Activated naive CD8-positive, alpha-beta T cell treated with anti-CD3 and anti-CD28 coated beads, Interleukin-2, amount 10 ng/mL, durations not matched to agents 7 days and 5 days (primary cell): ENCODE measurements at regions of chr1 and their contacts with region 1.

Region 1: GRCh38 chr1:150578965-150579798 is at the start of gene MCL1:
- DNase-seq: peak; percentile 88
- ATAC-seq: peak; percentile 69
- H3K4me3 Mint-ChIP-seq: peak within 1 kb of the TSS; percentile 92
- H3K27ac Mint-ChIP-seq: peak within 1 kb of the TSS; percentile 91
- H3K4me1 Mint-ChIP-seq: peaks cover 26% of the 10 kb centered on the region
- H3K27me3 Mint-ChIP-seq: no peaks in the 10 kb centered on the region
- total RNA-seq, gene MCL1: 302 to 303 TPM

Region 2: DNA sequence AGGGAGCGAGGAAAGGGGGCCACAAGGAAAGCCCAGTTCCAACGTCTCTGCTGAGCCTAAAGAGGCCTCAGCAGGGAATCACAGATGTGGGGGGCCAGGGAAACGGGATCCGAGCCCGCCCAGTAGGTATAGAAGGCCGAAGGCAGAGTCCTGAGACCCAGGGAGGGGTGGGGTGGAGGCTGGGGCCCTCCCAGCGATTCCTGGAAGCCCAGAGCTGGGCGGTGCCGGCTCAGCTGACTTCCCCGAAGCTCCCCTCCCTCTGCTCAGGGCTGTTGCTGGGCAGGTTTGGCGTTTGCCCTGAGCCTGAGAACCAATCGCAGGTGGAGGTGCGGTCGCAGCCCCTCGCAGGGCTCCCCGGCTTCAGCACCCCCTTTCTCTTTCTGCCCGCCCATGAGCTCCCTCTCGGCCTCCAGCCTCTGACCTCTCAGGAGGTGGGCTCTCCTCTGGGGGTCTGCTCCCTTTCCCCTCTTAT is 17.2 kb before region 1 on chr1:
- POLR2A ChIA-PET with region 1: interaction called, 1,003 read pairs
- DNase-seq: peak; percentile 87
- ATAC-seq: peak; percentile 61
- H3K4me3 Mint-ChIP-seq: peak overlapping the region; percentile 97
- H3K27ac Mint-ChIP-seq: peak overlapping the region; percentile 100
- H3K4me1 Mint-ChIP-seq: peaks cover 43% of the 10 kb centered on the region
- H3K27me3 Mint-ChIP-seq: no peaks in the 10 kb centered on the region

Region 3: GRCh38 chr1:150606463-150607148 is 27.4 kb after region 1 on chr1:
- POLR2A ChIA-PET with region 1: interaction called, 98 read pairs
- DNase-seq: no peak
- ATAC-seq: no peak
- H3K4me3 Mint-ChIP-seq: no peak overlapping the region
- H3K27ac Mint-ChIP-seq: peak overlapping the region; percentile 15
- H3K4me1 Mint-ChIP-seq: peaks cover 12% of the 10 kb centered on the region
- H3K27me3 Mint-ChIP-seq: no peaks in the 10 kb centered on the region

Region 4: GRCh38 chr1:150613061-150613920 is 34.1 kb after region 1 on chr1:
- POLR2A ChIA-PET with region 1: interaction called, 98 read pairs
- DNase-seq: no peak
- ATAC-seq: peak; percentile 48
- H3K4me3 Mint-ChIP-seq: peak overlapping the region; percentile 55
- H3K27ac Mint-ChIP-seq: peak overlapping the region; percentile 83
- H3K4me1 Mint-ChIP-seq: peaks cover 49% of the 10 kb centered on the region
- H3K27me3 Mint-ChIP-seq: no peaks in the 10 kb centered on the region

Region 5: GRCh38 chr1:150621497-150622302 is 42.5 kb after region 1 on chr1:
- POLR2A ChIA-PET with region 1: interaction called, 98 read pairs
- DNase-seq: peak; percentile 52
- ATAC-seq: peak; percentile 45
- H3K4me3 Mint-ChIP-seq: no peak overlapping the region
- H3K27ac Mint-ChIP-seq: peak overlapping the region; percentile 81
- H3K4me1 Mint-ChIP-seq: peaks cover 34% of the 10 kb centered on the region
- H3K27me3 Mint-ChIP-seq: no peaks in the 10 kb centered on the region

Region 6: DNA sequence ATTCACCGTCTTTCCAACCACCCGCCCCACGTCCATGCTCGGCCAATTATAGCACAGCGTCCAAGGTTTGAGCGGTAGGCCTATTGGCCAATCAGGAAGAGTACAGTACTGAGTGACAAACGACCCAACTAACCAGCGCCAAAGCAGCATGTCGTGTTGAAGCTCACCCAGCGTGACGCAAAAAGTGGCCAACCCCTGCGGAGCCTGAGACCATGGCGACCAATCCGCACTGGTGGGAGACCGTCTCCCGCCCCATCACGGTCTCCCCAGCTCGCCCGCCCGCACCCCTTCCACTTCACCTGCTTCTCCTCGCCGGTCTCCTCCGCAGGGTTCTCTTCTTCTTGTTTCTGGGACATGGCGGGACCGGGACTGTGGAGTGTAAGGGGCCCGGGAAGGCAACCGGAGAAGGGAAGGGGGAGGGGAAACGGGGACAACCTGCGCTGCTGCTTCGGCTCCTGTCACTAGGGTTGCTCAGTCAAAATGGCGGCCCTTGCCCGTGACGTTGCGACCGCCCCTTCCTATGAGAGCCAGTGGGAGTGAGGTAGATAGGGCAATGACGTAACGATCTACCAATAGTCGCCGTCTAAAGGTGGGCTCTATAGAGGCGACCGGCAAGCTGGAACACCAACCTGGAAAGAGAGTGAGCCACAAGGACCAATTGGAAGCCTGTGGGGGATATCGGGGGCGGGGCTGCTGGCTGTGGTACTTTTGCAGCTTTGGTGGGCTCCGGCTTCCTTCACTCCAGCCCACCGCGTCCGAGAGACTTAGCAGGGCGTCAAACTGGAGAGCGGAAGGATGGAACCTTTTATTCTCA is 50.1 kb after region 1 on chr1 and contains the start of gene ENSA:
- POLR2A ChIA-PET with region 1: interaction called, 76 read pairs
- DNase-seq: peak; percentile 91
- ATAC-seq: peak; percentile 91
- H3K4me3 Mint-ChIP-seq: no peak within 1 kb of the TSS
- H3K27ac Mint-ChIP-seq: no peak within 1 kb of the TSS
- H3K4me1 Mint-ChIP-seq: peaks cover 31% of the 10 kb centered on the region
- H3K27me3 Mint-ChIP-seq: no peaks in the 10 kb centered on the region
- total RNA-seq, gene ENSA: 161 to 172 TPM

Region 7: DNA sequence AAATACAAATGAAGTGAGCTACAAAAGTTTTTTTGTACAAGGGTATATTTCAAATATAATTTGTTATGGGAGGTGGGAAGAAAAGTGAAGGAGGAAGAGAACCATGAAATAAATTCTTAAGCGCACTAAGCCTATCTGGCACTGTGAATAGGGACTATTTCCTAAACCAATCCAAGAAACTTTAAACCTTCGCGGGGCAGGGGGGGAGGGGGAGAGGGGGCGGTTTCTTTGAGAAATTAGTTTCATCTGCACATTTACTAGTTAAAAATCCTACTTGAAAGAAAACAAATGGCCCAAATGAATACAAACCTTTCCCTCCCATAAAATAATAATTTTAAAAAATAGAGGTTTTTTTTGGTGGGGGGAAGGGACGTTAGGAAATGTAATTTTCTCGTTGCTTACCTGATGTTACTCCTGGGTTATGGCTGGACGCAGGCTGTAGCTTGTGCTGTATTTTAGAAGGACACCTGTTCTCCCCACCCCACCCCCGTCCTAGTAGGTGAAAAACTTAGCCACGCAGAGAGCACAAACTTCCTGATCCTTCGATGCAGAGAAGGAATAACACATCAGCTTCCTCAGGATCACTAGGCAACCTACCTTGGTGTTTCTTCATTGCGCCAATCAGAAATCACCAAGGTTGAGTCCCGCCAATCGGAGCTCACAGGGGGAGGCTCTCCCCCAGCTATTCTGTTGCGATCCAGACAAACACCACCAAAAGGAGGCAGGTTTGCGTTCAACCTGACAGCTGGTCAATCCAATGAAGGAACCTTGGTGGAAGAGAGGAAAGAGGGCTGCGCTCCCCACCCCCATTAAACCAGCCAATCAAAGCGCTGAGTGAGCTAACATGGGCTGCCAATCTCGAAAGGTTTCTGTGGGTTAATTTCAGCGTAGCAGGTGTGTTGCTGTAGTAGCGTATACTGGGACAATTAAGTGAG is 117.7 kb after region 1 on chr1 and contains the start of gene GOLPH3L:
- POLR2A ChIA-PET with region 1: interaction called, 10 read pairs
- DNase-seq: peak; percentile 79
- ATAC-seq: peak; percentile 100
- H3K4me3 Mint-ChIP-seq: peak within 1 kb of the TSS; percentile 99
- H3K27ac Mint-ChIP-seq: peak within 1 kb of the TSS; percentile 90
- H3K4me1 Mint-ChIP-seq: peaks cover 18% of the 10 kb centered on the region
- H3K27me3 Mint-ChIP-seq: peaks cover 12% of the 10 kb centered on the region
- total RNA-seq, gene GOLPH3L: 22.2 to 22.6 TPM